ENCODE measurements at regions of chr9 and their contacts with region 1.

Region 1: DNA sequence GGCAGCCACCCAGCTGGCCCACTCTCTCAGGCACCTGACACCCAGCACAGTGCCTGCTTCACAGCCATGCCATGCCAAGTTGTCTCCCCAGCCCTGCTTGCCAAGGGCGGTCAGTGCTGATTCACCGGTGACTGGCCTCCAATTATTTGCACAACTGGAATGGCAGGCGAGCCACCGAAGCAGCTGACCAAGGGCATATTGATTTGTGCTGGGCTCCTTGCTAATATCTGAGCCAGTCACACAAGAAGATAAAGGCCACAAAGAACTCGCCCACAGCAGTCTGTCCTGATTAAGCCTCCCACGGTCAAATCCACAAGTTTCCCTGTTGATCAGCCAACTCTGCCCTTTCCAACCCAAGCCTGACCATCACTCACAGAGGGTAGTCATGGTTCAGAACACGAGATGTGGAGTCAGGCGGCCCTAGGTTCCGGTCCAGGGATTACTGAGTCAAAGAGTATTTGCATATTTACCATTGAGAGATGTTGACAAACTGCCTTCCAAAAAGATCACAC is 6.4 kb upstream of the EEIG1 start:
- DNase-seq: peak in 1 of 2 donors; percentile 70
- H3K4me3 ChIP-seq: no peak overlapping the region
- H3K27ac ChIP-seq: no peak overlapping the region
- H3K4me1 ChIP-seq: peaks cover 0 to under 1% (median 0%) of the 10 kb centered on the region in 4 donors
- H3K27me3 ChIP-seq: no peaks in the 10 kb centered on the region
- CTCF ChIP-seq: no peak

Region 2: DNA sequence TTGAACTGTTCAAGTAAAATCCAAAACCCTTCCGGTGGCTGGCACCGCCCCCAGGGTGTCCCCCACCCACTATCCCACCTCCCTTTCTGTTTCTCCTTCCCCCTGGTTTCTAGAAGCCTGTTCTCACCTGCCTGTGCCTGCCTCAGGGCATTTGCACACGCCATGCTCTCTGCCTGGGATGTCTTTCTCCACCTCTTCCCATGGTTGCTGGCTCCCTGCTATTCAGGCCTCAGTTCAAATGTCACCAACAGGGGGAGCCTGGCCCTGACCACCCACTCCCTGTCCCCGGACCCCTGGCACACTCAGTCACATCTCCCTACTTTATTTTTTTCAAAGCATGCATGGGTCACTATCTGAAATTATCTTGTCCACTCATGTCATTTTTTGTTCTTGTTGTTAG is 33.5 kb after region 1 on chr9:
- intact Hi-C with region 1: loop called (anchors 5 kb)
- DNase-seq: no peak
- H3K4me3 ChIP-seq: no peak overlapping the region
- H3K27ac ChIP-seq: no peak overlapping the region
- H3K4me1 ChIP-seq: no peaks in the 10 kb centered on the region
- H3K27me3 ChIP-seq: no peaks in the 10 kb centered on the region
- CTCF ChIP-seq: no peak